ENCODE measurements at regions of chr9 and their contacts with region 1.

Region 1: GRCh38 chr9:136790927-136791641 is at the start of gene TMEM141:
- DNase-seq: peak; percentile 100
- H3K4me3 Mint-ChIP-seq: peak within 1 kb of the TSS; percentile 77
- H3K27ac Mint-ChIP-seq: peak within 1 kb of the TSS; percentile 89
- H3K4me1 Mint-ChIP-seq: peaks cover 36% of the 10 kb centered on the region
- H3K27me3 Mint-ChIP-seq: peaks cover 6% of the 10 kb centered on the region
- total RNA-seq, gene TMEM141: 39.6 to 42.9 TPM

Region 2: DNA sequence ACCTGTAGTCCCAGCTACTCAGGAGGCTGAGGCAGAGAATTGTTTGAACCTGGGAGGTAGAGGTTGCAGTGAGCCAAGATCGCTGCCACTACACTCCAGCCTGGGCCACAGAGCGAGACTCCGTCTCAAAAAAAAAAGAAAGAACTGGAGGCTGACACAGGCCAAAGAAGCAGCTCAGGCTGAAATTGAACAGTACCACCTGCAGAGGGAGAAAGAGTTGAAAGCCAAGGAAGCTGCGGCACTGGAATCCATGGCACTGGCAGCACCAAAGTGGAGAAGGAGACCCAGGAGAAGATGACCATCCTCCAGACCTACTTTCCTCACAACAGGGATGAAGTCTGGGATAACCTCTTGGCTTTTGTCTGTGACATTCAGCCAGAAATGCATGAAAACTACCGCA is 11.3 kb before region 1 on chr9:
- CTCF ChIA-PET with region 1: interaction called, 22 read pairs
- POLR2A ChIA-PET with region 1: no interaction called
- DNase-seq: no peak
- H3K4me3 Mint-ChIP-seq: no peak overlapping the region
- H3K27ac Mint-ChIP-seq: no peak overlapping the region
- H3K4me1 Mint-ChIP-seq: peaks cover 6% of the 10 kb centered on the region
- H3K27me3 Mint-ChIP-seq: peaks cover 46% of the 10 kb centered on the region

Region 3: DNA sequence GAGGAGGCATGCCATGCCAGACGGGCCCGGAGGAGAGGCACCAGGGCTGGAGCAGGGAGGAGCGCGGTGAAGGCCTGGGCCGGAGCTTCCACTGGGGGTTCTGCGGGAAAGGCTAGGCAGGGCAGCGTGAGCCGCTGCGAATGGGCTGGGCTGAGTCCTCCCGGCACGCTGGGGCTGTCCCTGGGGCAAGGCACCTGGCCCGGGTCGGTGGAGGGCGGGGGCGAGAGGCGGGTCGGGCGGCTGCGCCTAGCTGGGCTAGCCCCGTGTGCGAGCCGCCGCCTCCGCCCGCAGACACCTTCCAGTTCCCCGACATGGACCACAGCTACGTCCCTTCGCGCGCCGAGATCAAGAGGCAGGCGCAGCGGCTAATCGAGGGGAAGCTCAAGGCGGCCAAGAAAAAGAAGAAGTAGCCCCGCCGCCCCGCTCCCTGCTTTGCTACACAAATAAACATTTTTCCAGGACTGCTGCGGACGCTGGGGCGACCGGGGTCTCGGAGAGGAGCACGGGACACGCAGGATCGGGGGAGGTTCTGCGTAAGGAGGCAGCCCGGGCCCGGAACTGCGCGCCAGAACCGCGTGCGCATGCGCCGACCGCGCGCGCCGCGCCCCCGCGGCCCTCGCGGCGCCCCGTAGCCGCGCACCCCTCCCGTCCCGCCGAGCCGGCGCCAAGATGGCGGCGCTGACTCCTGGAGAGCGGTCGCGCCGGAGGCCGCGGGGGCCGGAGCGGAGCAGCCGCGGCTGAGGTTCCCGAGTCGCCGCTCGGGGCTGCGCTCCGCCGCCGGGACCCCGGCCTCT is 16.4 kb after region 1 on chr9 and contains the start of gene RABL6:
- CTCF ChIA-PET with region 1: interaction called, 46 read pairs
- POLR2A ChIA-PET with region 1: interaction called, 18 read pairs
- DNase-seq: peak; percentile 84
- H3K4me3 Mint-ChIP-seq: peak within 1 kb of the TSS; percentile 87
- H3K27ac Mint-ChIP-seq: peak within 1 kb of the TSS; percentile 76
- H3K4me1 Mint-ChIP-seq: peaks cover 37% of the 10 kb centered on the region
- H3K27me3 Mint-ChIP-seq: peaks cover under 1% of the 10 kb centered on the region
- total RNA-seq, gene RABL6: 96.0 to 96.2 TPM

Region 4: DNA sequence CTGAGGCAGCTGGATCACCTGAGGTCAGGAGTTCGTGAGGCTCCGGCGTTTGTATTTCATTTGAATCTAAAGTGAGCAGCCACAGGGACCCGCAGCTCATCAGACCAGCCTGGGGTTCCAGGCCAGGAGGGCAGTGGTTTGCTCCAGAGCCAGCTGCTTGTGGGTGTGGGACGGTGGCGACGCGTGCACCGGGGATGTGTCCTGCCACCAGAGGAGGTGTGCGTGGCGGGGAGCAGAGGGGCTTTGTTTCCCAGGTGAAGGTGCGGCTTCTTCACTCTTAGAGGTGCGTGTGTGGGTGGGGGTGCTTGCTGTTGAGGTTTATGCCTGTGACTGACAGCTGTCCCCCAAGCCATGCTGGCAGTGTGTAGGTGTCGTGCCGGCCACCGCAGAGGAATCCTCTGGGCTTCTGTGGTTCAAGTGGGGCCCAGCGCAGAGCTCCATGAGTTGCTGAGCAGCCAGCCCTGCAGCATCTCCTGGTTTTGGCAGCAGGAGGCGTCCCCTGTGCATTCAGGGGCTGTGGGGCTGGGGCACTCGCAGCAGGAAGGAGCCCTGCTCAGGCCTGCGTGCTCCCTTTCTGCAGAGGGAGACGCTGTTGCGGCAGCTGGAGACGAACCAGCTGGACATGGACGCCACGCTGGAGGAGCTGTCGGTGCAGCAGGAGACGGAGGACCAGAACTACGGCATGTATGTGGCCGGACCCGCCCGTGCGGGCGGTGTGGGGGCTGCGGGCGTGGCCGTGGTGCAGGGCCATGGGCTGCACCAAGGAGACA is 44.3 kb after region 1 on chr9:
- CTCF ChIA-PET with region 1: no interaction called
- POLR2A ChIA-PET with region 1: no interaction called
- DNase-seq: no peak
- H3K4me3 Mint-ChIP-seq: no peak overlapping the region
- H3K27ac Mint-ChIP-seq: no peak overlapping the region
- H3K4me1 Mint-ChIP-seq: peaks cover 3% of the 10 kb centered on the region
- H3K27me3 Mint-ChIP-seq: no peaks in the 10 kb centered on the region

Measured in activated CD4-positive, alpha-beta memory T cell treated with anti-CD3 and anti-CD28 coated beads, Interleukin-2, amount 10 ng/mL, durations not matched to agents 7 days and 5 days (primary cell).